ENCODE measurements at regions of chr10 and their contacts with region 1.

Region 1: DNA sequence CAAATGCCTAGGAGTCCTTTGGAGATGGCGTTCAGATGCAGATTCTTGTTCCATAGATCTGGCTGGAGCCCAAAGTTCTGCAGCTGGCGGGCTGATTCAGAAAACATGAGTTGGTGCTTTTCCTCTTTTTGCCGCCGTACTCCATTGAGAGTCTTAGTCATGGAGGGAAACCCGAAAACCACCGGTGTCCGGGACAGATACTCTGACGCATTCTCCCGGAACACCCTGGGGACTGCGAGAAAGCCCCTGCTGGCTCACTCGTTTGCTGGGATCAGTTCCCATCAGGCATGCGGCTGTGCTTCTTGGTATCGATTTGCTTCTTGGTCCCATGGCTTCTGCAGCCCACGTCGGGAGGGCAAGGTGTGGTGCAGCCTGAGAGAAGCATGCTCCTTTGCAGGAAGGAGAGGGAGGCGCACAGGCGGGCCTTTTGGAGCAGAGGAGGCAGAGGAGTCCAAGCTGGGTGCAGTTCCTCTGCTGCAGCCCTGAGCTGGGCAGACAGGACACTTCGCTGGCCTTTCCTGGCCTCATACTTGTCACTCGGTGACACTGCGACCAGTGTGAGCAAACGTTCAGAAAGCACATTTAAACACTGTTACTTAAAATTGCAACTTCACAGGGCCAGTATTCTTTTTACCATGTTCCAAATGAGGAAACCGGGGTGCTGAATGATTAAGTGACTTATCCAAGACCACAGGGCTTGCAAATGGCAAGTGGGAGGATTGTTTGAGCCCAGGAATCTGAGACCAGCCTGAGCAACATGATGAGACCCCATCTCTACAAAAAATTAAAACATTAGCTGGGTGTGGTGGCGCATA is 30.6 kb upstream of the PFKFB3 start:
- DNase-seq: no peak
- H3K4me3 Mint-ChIP-seq: peak overlapping the region; percentile 45
- H3K27ac Mint-ChIP-seq: peak overlapping the region; percentile 83
- H3K4me1 Mint-ChIP-seq: peaks cover 90% of the 10 kb centered on the region
- H3K27me3 Mint-ChIP-seq: no peaks in the 10 kb centered on the region

Region 2: GRCh38 chr10:5648584-5649457 is 523.3 kb before region 1 on chr10:
- CTCF ChIA-PET with region 1: no interaction called
- POLR2A ChIA-PET with region 1: no interaction called
- DNase-seq: no peak
- H3K4me3 Mint-ChIP-seq: no peak overlapping the region
- H3K27ac Mint-ChIP-seq: no peak overlapping the region
- H3K4me1 Mint-ChIP-seq: peaks cover 2% of the 10 kb centered on the region
- H3K27me3 Mint-ChIP-seq: no peaks in the 10 kb centered on the region

Region 3: GRCh38 chr10:6182454-6183098 is 10.5 kb after region 1 on chr10:
- CTCF ChIA-PET with region 1: interaction called, 17 read pairs
- POLR2A ChIA-PET with region 1: no interaction called
- DNase-seq: no peak
- H3K4me3 Mint-ChIP-seq: no peak overlapping the region
- H3K27ac Mint-ChIP-seq: no peak overlapping the region
- H3K4me1 Mint-ChIP-seq: peaks cover 44% of the 10 kb centered on the region
- H3K27me3 Mint-ChIP-seq: no peaks in the 10 kb centered on the region

Region 4: GRCh38 chr10:6409971-6410651 is 238.0 kb after region 1 on chr10:
- CTCF ChIA-PET with region 1: interaction called, 14 read pairs
- POLR2A ChIA-PET with region 1: no interaction called
- DNase-seq: peak; percentile 63
- H3K4me3 Mint-ChIP-seq: peak overlapping the region; percentile 43
- H3K27ac Mint-ChIP-seq: peak overlapping the region; percentile 85
- H3K4me1 Mint-ChIP-seq: peaks cover 47% of the 10 kb centered on the region
- H3K27me3 Mint-ChIP-seq: peaks cover 1% of the 10 kb centered on the region

Region 5: DNA sequence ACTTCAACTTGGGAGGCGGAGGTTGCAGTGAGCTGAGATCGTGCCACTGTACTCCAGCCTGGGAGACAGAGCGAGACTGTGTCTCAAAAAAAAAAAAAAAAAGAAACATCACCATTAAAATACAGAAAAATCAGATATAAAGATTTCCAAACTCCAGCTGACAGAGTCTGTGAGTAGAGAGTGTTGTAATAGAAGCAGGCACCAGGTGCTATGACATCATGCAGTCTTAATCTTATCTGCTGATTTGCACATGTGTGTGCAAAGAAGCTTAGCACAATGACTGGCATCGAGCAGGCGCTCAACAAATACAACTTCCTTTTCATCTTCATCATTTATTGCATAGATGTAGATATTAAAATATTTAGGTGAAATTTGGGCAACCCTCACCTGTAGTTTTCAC is 315.8 kb after region 1 on chr10:
- CTCF ChIA-PET with region 1: no interaction called
- POLR2A ChIA-PET with region 1: interaction called, 10 read pairs
- DNase-seq: no peak
- H3K4me3 Mint-ChIP-seq: no peak overlapping the region
- H3K27ac Mint-ChIP-seq: no peak overlapping the region
- H3K4me1 Mint-ChIP-seq: peaks cover 69% of the 10 kb centered on the region
- H3K27me3 Mint-ChIP-seq: no peaks in the 10 kb centered on the region

Measured in activated CD4-positive, alpha-beta T cell treated with anti-CD3 and anti-CD28 coated beads, Interleukin-2, amount 10 ng/mL, durations not matched to agents 7 days and 5 days (primary cell).